A549 (cell line): ENCODE measurements at regions of chr9 and their contacts with region 1.

Region 1: DNA sequence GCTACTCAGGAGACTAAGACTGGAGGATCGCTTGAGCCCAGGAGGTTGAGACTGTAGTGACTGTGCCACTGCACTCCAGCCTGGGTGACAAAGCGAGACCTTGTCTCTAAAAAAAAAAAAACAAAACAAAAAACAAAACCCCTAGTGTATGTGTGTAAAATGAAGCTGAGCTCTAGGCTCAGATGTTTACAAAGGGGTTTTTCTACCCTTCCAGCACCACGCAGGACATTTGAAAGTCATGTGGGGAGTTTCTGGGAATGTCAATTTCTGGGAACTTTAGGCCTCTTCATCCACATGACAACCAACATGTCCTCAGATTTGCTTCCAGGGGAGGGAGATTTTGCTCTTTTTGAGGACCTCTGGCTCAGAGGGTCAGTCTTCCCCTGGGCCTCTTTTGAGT is 42.4 kb upstream of the AIF1L start:
- DNase-seq: no peak
- ATAC-seq: no peak
- H3K4me3 ChIP-seq: no peak overlapping the region
- H3K27ac ChIP-seq: no peak overlapping the region
- H3K4me1 ChIP-seq: no peaks in the 10 kb centered on the region
- CTCF ChIP-seq: no peak
- EP300 ChIP-seq: no peak
- POLR2A ChIP-seq: no peak
- RAD21 ChIP-seq: no peak

Region 2: GRCh38 chr9:130973169-130973936 is 80.5 kb before region 1 on chr9:
- CTCF ChIA-PET with region 1: no interaction called
- POLR2A ChIA-PET with region 1: no interaction called
- DNase-seq: no peak
- ATAC-seq: peak; percentile 28 to 31
- H3K4me3 ChIP-seq: no peak overlapping the region
- H3K27ac ChIP-seq: no peak overlapping the region
- H3K4me1 ChIP-seq: no peaks in the 10 kb centered on the region
- CTCF ChIP-seq: no peak
- EP300 ChIP-seq: no peak
- POLR2A ChIP-seq: no peak
- RAD21 ChIP-seq: no peak

Region 3: DNA sequence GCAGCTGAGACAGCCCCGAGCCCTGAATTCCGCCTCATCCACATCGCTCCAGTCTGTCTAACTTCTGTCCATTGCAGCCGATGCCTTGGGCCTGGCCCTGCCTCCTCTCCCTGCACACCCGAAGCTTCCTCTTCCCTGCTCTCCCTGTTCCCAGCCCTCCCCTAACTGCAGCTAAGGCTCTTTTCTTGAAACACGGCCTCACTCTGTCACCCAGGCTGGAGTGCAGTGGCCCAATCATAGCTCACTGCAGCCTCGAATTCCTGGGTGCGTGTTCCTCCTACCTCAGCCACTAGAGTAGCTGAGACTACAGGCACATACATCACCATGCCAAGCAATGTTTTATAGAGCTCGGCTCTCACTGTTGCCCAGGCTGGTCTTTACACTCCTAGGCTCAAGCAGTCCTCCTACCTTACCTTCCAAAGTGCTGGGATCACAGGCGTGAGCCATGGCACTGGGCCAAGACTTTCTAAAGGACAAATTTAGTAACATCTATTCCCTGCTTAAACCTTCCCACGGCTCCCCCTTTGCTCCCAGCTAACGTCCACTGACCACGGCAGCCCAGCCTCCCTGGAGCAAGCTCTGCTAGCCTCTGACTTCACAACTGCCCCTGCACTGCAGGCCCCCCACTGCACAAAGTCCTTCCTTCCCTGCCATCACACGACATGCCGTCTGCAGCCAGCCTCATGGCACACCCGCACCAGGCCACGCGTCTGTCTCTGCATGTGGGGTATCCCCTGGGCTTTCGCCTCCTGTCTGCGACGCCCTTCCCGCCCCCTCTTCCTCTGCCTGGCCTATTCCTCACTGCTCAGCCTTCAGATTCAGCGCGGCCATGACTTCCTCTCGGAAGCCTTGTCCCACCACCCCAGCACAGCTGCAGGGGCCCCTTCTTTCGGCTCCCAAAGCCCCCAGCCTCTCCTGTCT is 16.3 kb before region 1 on chr9:
- CTCF ChIA-PET with region 1: interaction called, 15 read pairs
- POLR2A ChIA-PET with region 1: no interaction called
- DNase-seq: no peak
- ATAC-seq: peak; percentile 23 to 59; a peak in 4 of 6 replicates
- H3K4me3 ChIP-seq: no peak overlapping the region
- H3K27ac ChIP-seq: no peak overlapping the region
- H3K4me1 ChIP-seq: no peaks in the 10 kb centered on the region
- CTCF ChIP-seq: no peak
- EP300 ChIP-seq: no peak
- POLR2A ChIP-seq: no peak
- RAD21 ChIP-seq: no peak

Region 4: DNA sequence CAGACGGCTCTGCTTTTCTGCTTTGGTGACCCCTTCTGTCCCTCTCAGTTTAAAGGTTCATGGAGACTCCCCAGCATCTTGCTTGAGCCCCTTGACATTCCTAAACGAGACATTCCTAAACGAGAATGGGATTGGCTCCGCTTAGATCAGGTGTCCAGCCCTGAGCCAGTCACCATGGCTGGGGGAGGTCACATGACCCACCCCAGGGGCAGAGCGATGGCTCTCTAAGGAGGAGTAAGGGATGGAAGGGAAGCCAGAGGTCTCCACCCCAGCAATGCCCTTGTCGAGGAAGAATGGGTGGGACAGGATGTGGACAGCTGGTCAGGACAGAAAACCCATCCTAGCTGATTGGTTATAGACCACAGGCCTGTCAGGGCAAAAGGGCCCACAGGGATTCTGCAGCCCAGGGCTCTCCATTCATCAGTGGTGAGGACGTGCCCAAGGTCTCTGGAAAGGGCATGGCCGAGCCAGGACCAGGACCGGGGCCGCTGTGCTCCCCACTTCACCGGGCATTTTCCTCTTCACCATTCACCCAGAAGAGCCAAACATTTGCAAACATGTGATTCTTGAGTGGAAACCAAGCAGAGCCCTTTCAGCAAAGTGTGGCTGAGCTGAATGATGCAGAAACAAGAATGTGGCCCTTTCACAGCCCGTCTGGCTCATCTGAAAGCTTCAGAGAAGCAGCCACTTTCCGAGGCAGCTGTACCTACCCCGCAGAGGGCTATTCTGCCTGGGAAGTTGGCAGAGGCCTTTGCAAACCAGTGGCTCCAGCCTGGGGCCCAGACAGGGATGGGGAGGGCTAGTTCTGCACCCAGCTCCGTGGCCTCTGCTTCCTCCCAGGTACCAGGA is 22.7 kb after region 1 on chr9:
- CTCF ChIA-PET with region 1: interaction called, 14 read pairs
- POLR2A ChIA-PET with region 1: no interaction called
- DNase-seq: no peak
- ATAC-seq: peak in 1 of 2 experiments; percentile 54; a peak in 3 of 6 replicates
- H3K4me3 ChIP-seq: no peak overlapping the region
- H3K27ac ChIP-seq: no peak overlapping the region
- H3K4me1 ChIP-seq: no peaks in the 10 kb centered on the region
- CTCF ChIP-seq: no peak
- EP300 ChIP-seq: no peak
- POLR2A ChIP-seq: no peak
- RAD21 ChIP-seq: no peak

Region 5: GRCh38 chr9:131082774-131083512 is 29.0 kb after region 1 on chr9:
- CTCF ChIA-PET with region 1: interaction called, 14 read pairs
- POLR2A ChIA-PET with region 1: no interaction called
- DNase-seq: peak in 1 of 2 experiments; percentile 29
- ATAC-seq: peak; percentile 46 to 51; a peak in 4 of 6 replicates
- H3K4me3 ChIP-seq: no peak overlapping the region
- H3K27ac ChIP-seq: no peak overlapping the region
- H3K4me1 ChIP-seq: peaks cover 7% of the 10 kb centered on the region; the same call in 2 of the 3 replicates
- CTCF ChIP-seq: no peak
- EP300 ChIP-seq: no peak
- POLR2A ChIP-seq: no peak
- RAD21 ChIP-seq: no peak